ENCODE measurements at regions of chr4 and their contacts with region 1.

Region 1: DNA sequence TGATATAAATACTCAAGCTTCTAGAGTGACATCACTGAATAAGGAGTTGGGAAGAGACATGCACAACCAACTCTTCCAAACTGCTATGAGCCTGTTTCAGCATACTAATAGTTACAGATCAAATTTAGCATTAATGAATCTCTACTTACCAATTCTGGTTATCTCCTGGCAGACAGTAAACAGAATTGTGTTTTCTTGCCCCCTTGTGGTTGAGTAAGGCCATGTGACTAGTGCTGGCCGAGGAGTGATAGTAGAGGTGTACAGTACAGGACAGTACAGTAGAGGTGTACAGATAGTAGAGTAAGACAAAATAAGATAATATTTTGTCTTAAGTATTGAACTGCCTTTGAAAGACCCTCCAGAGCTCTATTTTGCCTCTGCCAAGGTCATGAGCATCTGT is 681.4 kb downstream of the GABRG1 start:
- DNase-seq: no peak
- ATAC-seq: peak; percentile 84
- H3K4me3 ChIP-seq: no peak overlapping the region
- H3K27ac ChIP-seq: no peak overlapping the region
- H3K4me1 ChIP-seq: no peaks in the 10 kb centered on the region
- H3K27me3 ChIP-seq: no peaks in the 10 kb centered on the region
- CTCF ChIP-seq: peak in 2 of 3 experiments; percentile 33; a peak in 2 of 6 replicates
- EP300 ChIP-seq: no peak
- POLR2A ChIP-seq: no peak
- RAD21 ChIP-seq: peak; percentile 76

Region 2: DNA sequence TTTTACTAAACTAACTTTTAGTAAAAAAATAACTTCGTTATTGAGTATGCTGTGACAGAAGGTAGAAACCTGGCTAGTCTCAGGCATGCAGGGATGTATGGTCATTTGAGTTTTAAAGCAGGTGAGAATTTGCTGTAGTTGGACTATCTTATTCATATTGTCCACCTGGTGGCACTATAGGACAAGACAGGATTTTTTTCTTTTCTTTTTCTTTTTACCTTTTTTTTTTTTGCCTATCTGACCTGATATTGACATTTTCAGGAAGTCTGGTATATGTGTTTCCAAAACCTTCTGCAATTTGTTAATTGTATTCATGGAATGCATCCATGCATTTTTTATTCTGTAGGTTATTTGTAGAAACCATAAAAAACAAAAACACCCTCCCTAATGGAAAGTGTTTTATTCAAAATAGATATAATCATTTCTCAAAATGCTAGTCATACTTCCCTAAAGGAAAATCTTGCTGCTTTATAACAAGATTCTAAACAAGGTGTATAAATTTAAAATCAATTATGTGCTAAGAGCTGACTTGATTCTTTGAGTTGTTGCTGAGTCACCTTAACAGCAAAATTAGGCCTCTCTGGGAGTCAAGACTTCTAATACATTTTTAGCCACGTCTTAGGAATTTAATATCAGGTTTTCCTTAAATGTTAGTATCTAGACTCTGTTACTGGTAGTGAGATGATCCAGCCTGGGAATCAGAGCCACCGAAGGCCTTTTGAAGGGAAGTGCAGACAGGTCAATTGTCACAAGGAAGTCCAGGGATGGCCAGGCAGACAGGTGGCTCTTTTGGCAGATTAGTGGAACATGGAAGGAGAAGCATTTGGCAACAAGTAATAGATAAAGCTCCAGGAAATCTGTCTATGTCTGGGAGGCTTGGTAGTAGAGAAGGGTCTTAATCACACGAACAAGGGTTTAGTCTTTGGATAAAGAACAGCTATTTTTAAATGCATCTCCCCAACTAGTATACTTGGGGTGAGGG is 514.8 kb before region 1 on chr4:
- CTCF ChIA-PET with region 1: interaction called, 8 read pairs
- POLR2A ChIA-PET with region 1: no interaction called
- RAD21 ChIA-PET with region 1: no interaction called
- SMC1A ChIA-PET with region 1: interaction called, 5 read pairs
- in situ Hi-C with region 1: no loop called
- intact Hi-C with region 1: loop called (anchors 2 kb)
- DNase-seq: no peak
- ATAC-seq: peak; percentile 66; the same call in 2 of the 3 replicates
- H3K4me3 ChIP-seq: no peak overlapping the region
- H3K27ac ChIP-seq: no peak overlapping the region
- H3K4me1 ChIP-seq: no peaks in the 10 kb centered on the region
- H3K27me3 ChIP-seq: no peaks in the 10 kb centered on the region
- CTCF ChIP-seq: peak; percentile 27 to 48 (median 30); a peak in 4 of 6 replicates
- EP300 ChIP-seq: no peak
- POLR2A ChIP-seq: no peak
- RAD21 ChIP-seq: peak; percentile 77

Region 3: GRCh38 chr4:45539142-45539814 is 96.8 kb after region 1 on chr4:
- CTCF ChIA-PET with region 1: no interaction called
- POLR2A ChIA-PET with region 1: no interaction called
- RAD21 ChIA-PET with region 1: no interaction called
- SMC1A ChIA-PET with region 1: no interaction called
- in situ Hi-C with region 1: no loop called
- intact Hi-C with region 1: no loop called
- DNase-seq: no peak
- ATAC-seq: no peak
- H3K4me3 ChIP-seq: no peak overlapping the region
- H3K27ac ChIP-seq: no peak overlapping the region
- H3K4me1 ChIP-seq: no peaks in the 10 kb centered on the region
- H3K27me3 ChIP-seq: no peaks in the 10 kb centered on the region
- CTCF ChIP-seq: no peak
- EP300 ChIP-seq: no peak
- POLR2A ChIP-seq: no peak
- RAD21 ChIP-seq: no peak

Measured in GM12878 (cell line).